Heart right ventricle (tissue), 16 donors: ENCODE measurements at regions of chr15 and their contacts with region 1.

Region 1: DNA sequence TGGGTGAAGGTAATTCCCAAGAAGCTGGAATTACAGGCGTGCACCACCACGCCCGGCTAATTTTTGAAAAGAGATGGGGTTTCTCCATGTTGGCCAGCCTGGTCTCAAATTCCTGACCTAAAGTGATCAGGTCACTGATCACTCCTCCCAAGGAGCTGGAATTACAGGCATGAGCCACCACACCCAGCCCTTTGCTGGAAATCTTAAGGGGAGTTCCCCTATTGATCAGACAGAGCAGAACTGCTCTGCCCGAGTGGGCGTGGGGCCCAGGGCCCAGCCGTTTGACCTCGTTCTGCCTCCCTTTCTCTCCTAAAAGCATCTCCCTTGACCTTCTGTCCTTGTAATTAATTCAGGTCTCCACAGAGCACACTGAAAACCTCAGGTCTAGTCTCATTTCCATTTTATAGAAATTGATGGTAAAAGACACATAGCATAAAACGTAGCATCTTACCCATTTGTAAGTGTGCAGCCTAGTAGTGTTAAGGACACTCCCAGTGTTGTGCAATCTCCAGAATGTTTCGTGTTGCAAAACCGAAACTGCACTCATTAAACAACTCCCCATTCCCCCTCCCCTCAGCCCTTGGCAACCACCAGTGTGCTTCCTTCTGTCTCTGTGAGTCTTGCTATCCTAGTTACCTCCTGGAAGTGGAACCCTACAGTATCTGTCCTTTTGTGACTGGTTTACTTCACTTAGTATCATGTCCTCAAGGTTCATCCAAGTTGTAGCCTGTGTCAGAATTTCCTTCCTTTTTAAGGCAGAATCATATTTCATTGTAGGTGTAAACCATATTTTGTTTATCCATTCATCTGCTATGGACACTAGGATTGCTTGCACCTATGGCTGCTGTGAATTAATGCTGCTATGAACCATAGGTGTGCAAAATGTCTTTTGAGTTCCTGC is 89.4 kb downstream of the SLCO3A1 start:
- DNase-seq: peak; percentile 63 to 88
- ATAC-seq: peak; percentile 75 to 92 (median 86)
- H3K4me3 ChIP-seq: peak overlapping the region in 7 of 10 donors; percentile 6 to 35 (median 17)
- H3K27ac ChIP-seq: peak overlapping the region in 9 of 10 donors; percentile 29 to 82 (median 68)
- H3K4me1 ChIP-seq: peaks cover 37 to 98% (median 93%) of the 10 kb centered on the region in 9 donors
- H3K27me3 ChIP-seq: no peaks in the 10 kb centered on the region
- CTCF ChIP-seq: no peak

Region 2: DNA sequence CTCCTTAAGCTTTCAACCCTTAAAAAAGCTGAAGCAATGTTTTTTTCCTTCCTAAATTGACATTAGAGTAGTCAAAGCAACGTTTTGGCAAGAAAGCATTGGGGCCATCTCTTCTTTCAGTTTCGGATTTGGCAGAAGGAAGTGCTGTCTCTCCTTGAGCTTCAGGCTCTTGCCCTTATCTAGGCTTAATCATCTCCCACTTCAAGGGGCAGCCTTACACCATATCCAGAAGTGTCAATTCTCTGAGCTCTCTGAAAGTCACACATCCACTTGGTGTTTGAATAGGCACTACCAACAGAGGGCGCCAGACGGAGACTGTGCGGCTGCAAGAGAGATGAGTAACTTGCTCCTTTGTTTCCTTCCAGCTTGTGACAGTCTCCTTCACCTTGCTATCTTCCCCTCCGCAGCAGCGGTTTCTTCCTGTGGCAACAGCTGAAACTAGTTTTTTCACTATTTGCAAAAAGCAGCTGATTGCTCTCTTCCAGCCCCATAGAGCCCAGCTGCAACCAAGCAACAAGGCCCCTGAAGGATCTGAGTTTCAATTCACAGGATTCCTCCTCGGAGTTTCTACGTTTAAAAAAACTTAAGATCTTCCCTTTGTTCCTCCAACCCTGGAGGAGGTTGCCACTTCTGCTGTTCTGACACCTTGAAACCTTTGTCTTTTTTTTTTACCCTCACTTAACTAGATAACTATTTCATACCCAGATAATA is 236.4 kb before region 1 on chr15:
- intact Hi-C with region 1: loop called in 1 of 10 experiments (anchors 10 kb)
- DNase-seq: peak; percentile 62 to 82
- ATAC-seq: peak; percentile 78 to 90 (median 84)
- H3K4me3 ChIP-seq: peak overlapping the region in 1 of 10 donors; percentile 3
- H3K27ac ChIP-seq: peak overlapping the region in 5 of 10 donors; percentile 8 to 79 (median 32)
- H3K4me1 ChIP-seq: peaks cover 0 to 23% (median 6%) of the 10 kb centered on the region in 9 donors
- H3K27me3 ChIP-seq: no peaks in the 10 kb centered on the region
- CTCF ChIP-seq: peak; percentile 77 to 95 (median 93)

Region 3: DNA sequence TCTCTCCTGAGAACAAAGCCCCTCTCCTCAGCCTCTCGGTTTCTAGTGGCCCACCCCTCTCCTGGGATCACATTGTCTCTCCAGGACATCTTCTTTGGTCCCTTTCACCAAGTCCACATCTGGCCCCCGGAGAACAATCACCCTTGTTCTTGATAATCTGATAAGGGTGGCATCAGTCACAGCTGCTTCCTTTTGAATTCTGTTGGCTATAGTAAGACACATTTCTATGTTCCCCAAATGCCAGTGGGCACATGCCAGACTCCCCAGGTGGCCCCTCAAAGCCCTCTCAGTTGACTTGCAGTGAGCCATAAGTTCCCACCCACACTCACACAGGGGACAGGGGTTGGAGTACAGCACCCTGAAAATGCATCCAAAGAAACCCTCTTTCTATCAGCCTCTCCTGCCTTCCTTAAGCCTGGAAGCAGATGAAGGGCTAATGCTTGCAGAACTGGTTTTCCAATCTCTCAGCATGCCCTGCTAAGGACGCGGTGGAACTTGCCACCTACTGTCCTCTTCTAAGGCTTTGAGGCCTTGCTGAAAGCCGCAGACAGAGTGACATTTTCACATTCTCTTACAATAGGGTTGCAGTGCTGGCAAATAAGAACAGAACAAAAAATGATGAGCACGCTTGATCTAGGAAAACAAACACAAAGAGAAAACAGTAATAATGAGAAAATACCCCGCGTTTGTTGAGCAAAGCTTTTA is 190.7 kb before region 1 on chr15:
- intact Hi-C with region 1: no loop called
- DNase-seq: no peak
- ATAC-seq: no peak
- H3K4me3 ChIP-seq: no peak overlapping the region
- H3K27ac ChIP-seq: no peak overlapping the region
- H3K4me1 ChIP-seq: no peaks in the 10 kb centered on the region
- H3K27me3 ChIP-seq: no peaks in the 10 kb centered on the region
- CTCF ChIP-seq: no peak

Region 4: DNA sequence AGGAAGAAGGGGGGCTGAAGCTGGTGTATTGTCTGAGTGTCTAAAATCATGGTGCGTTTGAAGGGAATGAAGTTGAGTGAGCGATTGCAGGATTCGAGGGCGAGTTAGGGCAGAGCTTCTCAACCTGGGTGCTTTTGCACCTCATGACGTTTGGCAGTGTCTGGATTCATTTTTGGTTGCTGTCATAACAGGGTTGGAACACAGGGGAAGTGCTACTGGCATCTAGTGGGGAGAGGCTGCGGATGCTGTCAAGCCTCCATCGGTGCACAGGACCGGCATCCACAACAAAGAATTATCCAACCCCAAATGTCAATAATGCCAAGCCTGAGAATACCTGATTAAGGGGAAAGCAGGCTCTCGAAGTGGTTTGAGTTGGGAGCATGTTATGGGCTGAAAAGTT is 30.6 kb after region 1 on chr15:
- intact Hi-C with region 1: no loop called
- DNase-seq: peak in 1 of 2 donors; percentile 47
- ATAC-seq: peak in 4 of 8 donors; percentile 26 to 42 (median 38)
- H3K4me3 ChIP-seq: no peak overlapping the region
- H3K27ac ChIP-seq: peak overlapping the region in 1 of 10 donors; percentile 6
- H3K4me1 ChIP-seq: peaks cover 20 to 74% (median 56%) of the 10 kb centered on the region in 9 donors
- H3K27me3 ChIP-seq: no peaks in the 10 kb centered on the region
- CTCF ChIP-seq: peak in 7 of 9 donors; percentile 32 to 62 (median 35)

Region 5: DNA sequence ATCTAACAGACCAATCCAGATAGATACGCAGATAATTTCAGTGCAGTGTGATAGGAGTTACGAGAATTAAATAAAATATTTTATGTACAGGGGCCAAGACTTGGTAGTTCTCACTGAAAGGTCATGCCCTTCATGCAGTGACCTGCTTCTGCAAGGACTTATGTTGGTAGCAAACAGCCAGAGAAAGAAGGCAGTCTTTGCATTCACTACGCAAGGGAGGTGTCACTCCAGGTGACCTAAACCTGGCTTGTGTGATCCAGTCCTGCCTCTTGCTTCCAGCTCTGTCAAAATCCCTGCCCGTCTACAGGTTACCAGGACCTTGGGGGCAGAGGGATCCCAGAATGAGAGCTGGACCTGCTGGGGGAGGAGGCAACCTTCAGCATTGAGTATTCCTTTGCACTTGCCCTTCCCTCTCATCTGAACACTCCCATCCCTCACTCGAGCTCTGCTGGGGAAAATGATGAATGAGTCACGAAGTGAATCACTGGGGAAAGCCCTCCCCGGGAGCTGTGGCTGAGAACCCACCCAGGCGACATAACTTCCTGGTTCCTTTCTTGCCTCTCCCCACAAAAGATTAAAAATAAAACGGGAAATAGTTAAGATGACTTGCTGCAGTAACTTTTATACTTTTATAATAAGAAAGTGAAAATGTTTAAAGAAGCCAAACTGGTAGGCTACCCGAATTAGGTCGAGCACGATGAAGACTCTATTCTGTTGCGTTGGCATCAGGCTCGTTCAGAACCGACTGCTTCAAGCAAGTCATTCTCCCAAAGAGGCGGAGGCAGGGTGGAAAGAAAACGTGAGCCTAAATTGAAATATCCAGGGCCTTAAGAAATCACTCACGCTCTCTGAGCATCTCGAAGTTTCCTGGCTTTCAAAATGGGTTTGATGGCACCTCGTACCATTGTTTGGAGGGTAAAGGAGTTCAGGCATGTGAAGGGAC is 126.7 kb after region 1 on chr15:
- intact Hi-C with region 1: loop called in 3 of 10 experiments (anchors 2 to 10 kb)
- DNase-seq: peak in 1 of 2 donors; percentile 68
- ATAC-seq: peak; percentile 65 to 92 (median 82)
- H3K4me3 ChIP-seq: peak overlapping the region in 8 of 10 donors; percentile 9 to 39 (median 30)
- H3K27ac ChIP-seq: peak overlapping the region in 9 of 10 donors; percentile 29 to 81 (median 72)
- H3K4me1 ChIP-seq: peaks cover 8 to 70% (median 66%) of the 10 kb centered on the region in 9 donors
- H3K27me3 ChIP-seq: no peaks in the 10 kb centered on the region
- CTCF ChIP-seq: no peak